CD4-positive, alpha-beta memory T cell (primary cell): ENCODE measurements at regions of chr11 and their contacts with region 1.

Region 1: DNA sequence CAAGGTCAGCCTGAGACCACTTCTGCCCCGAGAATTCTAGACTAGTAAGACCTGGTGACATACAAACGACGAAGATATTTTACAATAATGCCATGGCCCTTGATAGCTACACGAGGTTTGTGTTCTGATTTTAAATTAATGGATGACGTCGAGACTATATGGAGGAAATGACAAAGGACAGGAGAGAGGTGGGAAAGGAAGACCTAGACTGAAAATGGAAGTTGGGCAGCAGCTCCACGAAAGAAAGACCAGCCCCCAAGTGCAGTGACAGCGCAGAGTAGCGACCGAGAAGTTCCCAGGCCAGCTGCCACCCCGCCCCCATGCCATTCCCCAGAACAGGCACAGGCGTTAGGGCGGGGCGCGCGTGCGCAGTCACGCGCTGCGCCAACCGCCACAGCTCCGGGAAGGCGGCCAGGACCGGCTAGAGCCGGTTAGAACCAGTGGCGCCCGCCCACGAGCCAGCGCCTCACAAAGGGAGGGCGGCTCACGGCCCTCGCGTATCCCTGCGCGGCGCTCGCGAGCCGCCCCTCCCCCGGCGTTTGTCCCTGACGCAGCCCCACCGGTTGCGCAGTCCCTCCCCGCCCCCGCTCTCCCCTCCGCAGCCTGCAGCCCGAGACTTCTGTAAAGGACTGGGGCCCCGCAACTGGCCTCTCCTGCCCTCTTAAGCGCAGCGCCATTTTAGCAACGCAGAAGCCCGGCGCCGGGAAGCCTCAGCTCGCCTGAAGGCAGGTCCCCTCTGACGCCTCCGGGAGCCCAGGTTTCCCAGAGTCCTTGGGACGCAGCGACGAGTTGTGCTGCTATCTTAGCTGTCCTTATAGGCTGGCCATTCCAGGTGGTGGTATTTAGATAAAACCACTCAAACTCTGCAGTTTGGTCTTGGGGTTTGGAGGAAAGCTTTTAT is 1.5 kb upstream of the MALAT1 start:
- DNase-seq: peak; percentile 97 to 98 (median 97)
- H3K4me3 ChIP-seq: peak overlapping the region; percentile 96 to 99
- H3K4me3 Mint-ChIP-seq: peak overlapping the region in 1 of 8 donors; percentile 85
- H3K27ac ChIP-seq: peak overlapping the region; percentile 97
- H3K27ac Mint-ChIP-seq: no peak overlapping the region
- H3K4me1 ChIP-seq: peaks cover 16% of the 10 kb centered on the region
- H3K4me1 Mint-ChIP-seq: peaks cover 7 to 41% (median 20%) of the 10 kb centered on the region in 4 donors
- H3K27me3 ChIP-seq: no peaks in the 10 kb centered on the region
- H3K27me3 Mint-ChIP-seq: peaks cover 0 to 3% of the 10 kb centered on the region in 2 donors

Region 2: GRCh38 chr11:65117216-65118096 is 379.9 kb before region 1 on chr11 and contains the start of gene ZNHIT2:
- CTCF ChIA-PET with region 1: no interaction called
- POLR2A ChIA-PET with region 1: interaction called, 14 read pairs
- intact Hi-C with region 1: no loop called
- DNase-seq: peak; percentile 100
- H3K4me3 ChIP-seq: peak within 1 kb of the TSS; percentile 69 to 82
- H3K4me3 Mint-ChIP-seq: peak within 1 kb of the TSS; percentile 88 to 94 (median 92)
- H3K27ac ChIP-seq: peak within 1 kb of the TSS; percentile 91
- H3K27ac Mint-ChIP-seq: peak within 1 kb of the TSS; percentile 95 to 99 (median 97)
- H3K4me1 ChIP-seq: peaks cover 40% of the 10 kb centered on the region
- H3K4me1 Mint-ChIP-seq: peaks cover 17 to 69% (median 42%) of the 10 kb centered on the region in 4 donors
- H3K27me3 ChIP-seq: no peaks in the 10 kb centered on the region
- H3K27me3 Mint-ChIP-seq: no peaks in the 10 kb centered on the region
- total RNA-seq, gene ZNHIT2: 15.9 to 16.5 TPM

Region 3: DNA sequence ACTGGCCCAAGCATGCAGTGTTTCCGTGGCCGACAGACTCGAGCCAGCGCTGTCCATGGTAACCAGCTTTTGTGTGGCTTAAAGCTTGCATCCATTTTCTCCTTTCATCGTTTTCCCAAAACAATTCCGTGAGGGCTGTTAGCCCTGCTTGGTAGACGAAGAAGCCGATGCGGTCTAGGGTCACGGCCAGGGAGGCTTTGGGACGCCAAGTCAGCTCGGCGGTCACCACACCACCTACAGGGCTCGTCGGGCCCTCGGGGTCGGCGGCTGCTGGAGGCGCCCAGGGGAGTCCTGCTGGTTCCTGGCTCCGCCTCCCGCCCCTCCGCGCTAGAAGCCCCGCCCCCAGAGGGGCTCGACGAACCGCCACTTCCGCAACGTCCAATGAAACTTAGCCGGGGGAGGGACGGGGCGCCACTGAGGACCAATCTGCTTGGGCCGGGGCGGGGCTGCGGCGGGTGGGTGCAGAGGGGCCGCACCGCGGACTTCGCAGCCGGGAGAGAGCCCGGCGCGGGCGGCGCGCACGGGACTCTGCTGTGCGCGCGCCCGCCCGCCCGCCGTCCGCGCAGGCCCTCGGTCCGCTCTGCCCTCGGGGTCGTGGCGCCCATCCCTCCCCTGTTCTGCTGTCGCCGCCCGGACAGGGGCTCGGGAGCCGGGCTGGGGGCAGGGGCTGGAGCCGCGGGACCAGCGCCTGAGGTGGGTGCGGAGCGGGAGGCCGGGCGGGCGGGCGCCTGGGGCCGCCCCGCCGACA is 143.0 kb before region 1 on chr11 and contains the start of gene TIGD3:
- CTCF ChIA-PET with region 1: no interaction called
- POLR2A ChIA-PET with region 1: interaction called, 23 read pairs
- intact Hi-C with region 1: no loop called
- DNase-seq: peak; percentile 92 to 97 (median 94)
- H3K4me3 ChIP-seq: peak within 1 kb of the TSS in 1 of 2 donors; percentile 32
- H3K4me3 Mint-ChIP-seq: peak within 1 kb of the TSS; percentile 90 to 97 (median 93)
- H3K27ac ChIP-seq: peak within 1 kb of the TSS; percentile 50
- H3K27ac Mint-ChIP-seq: peak within 1 kb of the TSS; percentile 82 to 96 (median 88)
- H3K4me1 ChIP-seq: peaks cover 7% of the 10 kb centered on the region
- H3K4me1 Mint-ChIP-seq: peaks cover 8 to 17% (median 11%) of the 10 kb centered on the region in 4 donors
- H3K27me3 ChIP-seq: no peaks in the 10 kb centered on the region
- H3K27me3 Mint-ChIP-seq: no peaks in the 10 kb centered on the region
- total RNA-seq, gene TIGD3: 0.96 to 1.1 TPM

Region 4: GRCh38 chr11:65418711-65419459 is 78.5 kb before region 1 on chr11:
- CTCF ChIA-PET with region 1: interaction called, 192 read pairs
- POLR2A ChIA-PET with region 1: interaction called, 3,839 read pairs
- intact Hi-C with region 1: no loop called
- DNase-seq: peak; percentile 64 to 87 (median 70)
- H3K4me3 ChIP-seq: peak overlapping the region; percentile 86 to 95
- H3K4me3 Mint-ChIP-seq: peak overlapping the region; percentile 92 to 97 (median 95)
- H3K27ac ChIP-seq: peak overlapping the region; percentile 98
- H3K27ac Mint-ChIP-seq: peak overlapping the region; percentile 93 to 100 (median 97)
- H3K4me1 ChIP-seq: peaks cover 57% of the 10 kb centered on the region
- H3K4me1 Mint-ChIP-seq: peaks cover 30 to 72% (median 42%) of the 10 kb centered on the region in 4 donors
- H3K27me3 ChIP-seq: no peaks in the 10 kb centered on the region
- H3K27me3 Mint-ChIP-seq: peaks cover 0 to 4% of the 10 kb centered on the region in 2 donors

Region 5: DNA sequence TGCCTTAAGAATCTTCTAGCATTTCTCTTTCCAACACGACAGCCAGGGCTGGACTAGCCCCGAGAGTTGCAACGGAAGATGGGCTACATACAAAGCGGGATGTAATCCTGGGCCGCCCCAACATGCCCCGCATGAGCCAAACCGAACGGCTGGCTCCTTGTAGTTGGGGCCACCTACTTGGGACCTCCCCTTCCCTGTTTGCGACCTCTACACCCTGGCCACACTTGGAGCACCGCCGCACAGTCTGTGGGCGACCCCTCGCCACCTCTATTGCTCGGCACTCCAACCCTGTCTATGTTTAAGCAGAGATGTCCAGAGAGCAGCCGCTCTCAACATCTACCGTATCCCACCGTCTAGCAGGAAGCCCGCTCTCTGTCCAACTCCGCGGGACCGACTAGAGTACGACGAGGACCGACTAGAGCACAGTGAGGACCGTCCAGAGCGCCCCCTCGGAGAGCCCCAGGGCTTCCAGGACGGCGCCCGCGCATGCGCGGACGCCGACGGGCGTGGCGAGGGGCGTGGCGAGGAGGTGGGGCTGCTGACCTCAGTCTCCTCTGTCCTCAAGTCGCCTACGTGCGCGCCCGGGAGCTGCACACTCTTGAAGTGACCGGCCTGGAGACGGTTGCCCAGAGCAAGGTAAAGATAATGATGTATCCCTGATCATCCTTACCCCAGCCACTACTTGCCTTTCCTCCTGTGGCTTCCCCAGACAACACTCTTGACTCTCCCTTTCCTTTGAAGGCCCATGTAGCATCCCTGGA is 42.5 kb before region 1 on chr11:
- CTCF ChIA-PET with region 1: no interaction called
- POLR2A ChIA-PET with region 1: interaction called, 1,536 read pairs
- intact Hi-C with region 1: no loop called
- DNase-seq: peak; percentile 55 to 76 (median 64)
- H3K4me3 ChIP-seq: peak overlapping the region; percentile 78 to 84
- H3K4me3 Mint-ChIP-seq: peak overlapping the region; percentile 85 to 91 (median 88)
- H3K27ac ChIP-seq: peak overlapping the region; percentile 64
- H3K27ac Mint-ChIP-seq: peak overlapping the region; percentile 84 to 97 (median 89)
- H3K4me1 ChIP-seq: peaks cover 12% of the 10 kb centered on the region
- H3K4me1 Mint-ChIP-seq: peaks cover 11 to 34% (median 16%) of the 10 kb centered on the region in 4 donors
- H3K27me3 ChIP-seq: no peaks in the 10 kb centered on the region
- H3K27me3 Mint-ChIP-seq: no peaks in the 10 kb centered on the region

Region 6: DNA sequence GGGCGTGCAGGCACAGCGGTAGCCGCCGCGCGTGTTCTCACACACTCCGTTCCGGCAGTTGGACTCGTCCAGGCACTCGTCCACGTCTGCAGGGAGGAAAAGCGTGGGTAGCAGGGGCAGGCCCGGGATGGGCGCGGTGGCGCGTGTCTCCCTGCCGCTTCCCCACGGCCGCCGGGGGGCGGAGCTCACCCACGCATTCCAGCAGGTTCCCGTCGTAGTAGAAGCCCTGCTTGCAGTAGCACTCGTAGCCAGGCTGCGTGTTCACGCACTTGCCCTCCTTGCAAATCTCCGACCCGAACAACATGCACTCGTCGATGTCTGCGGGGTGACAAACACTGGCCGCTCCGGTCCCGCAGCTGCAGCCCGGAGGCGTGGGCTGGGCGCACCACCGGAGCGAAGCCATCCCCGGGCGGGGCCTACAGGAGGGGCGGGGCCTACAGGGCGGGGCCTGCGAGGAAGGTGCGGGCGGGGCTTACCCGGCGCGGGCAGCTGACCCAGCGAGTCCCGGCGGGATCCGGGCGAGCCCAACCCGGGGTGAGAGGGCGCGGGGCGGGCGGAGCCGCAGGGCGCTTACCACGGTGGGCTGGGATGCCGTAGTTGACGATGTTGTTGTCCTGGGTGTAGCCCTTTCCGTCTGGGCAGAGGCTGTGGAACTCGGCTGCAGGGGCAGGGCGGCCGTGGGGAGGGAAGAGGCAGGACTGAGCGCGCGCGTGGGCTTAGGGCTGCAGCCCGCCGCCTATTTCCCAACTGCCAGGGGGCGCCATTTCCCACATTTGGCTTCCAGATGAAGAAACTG is 43.1 kb after region 1 on chr11:
- CTCF ChIA-PET with region 1: interaction called, 6 read pairs
- POLR2A ChIA-PET with region 1: interaction called, 38 read pairs
- intact Hi-C with region 1: no loop called
- DNase-seq: peak; percentile 90 to 95 (median 91)
- H3K4me3 ChIP-seq: peak overlapping the region; percentile 73 to 91
- H3K4me3 Mint-ChIP-seq: peak overlapping the region; percentile 82 to 90 (median 87)
- H3K27ac ChIP-seq: peak overlapping the region; percentile 55
- H3K27ac Mint-ChIP-seq: peak overlapping the region; percentile 81 to 95 (median 87)
- H3K4me1 ChIP-seq: peaks cover 17% of the 10 kb centered on the region
- H3K4me1 Mint-ChIP-seq: peaks cover 12 to 36% (median 16%) of the 10 kb centered on the region in 4 donors
- H3K27me3 ChIP-seq: no peaks in the 10 kb centered on the region
- H3K27me3 Mint-ChIP-seq: no peaks in the 10 kb centered on the region

Region 7: DNA sequence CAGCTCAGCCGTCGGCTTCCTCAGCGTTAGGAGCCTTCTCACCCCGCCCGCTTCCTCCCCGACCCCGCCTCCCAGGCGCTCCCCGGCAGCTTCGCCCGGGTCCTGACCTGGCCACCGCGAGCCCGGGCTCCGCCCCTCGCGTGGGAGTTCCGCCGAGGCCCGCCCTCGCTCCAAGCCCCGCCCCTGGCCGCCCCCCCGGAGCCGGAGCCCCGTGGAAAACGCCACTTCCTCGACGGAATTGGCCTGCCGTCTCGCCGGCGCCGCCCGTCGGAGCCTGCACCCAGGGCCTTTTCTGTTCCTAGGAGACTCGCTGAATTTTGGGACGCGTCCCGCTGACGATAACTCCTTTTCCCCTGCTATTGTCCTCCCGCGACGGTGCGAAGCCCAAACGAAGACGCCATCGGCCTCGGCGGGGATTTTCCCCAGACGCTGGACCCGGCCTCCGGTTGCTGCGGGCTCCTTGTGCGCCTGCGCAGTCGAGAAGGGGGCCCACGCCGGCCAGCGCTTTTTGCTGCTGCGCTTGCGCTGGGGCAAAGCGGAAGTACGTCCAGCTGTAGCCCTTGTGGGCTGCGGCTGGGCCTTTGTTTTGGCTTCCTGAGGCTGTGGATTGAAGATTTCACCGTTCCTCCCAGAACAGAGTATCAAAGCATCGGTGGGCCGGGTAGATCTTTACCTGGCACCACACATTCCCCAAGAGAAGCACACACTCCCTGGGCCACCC is 155.3 kb after region 1 on chr11:
- CTCF ChIA-PET with region 1: no interaction called
- POLR2A ChIA-PET with region 1: interaction called, 25 read pairs
- intact Hi-C with region 1: no loop called
- DNase-seq: peak; percentile 95 to 99 (median 97)
- H3K4me3 ChIP-seq: peak overlapping the region; percentile 50 to 64
- H3K4me3 Mint-ChIP-seq: peak overlapping the region; percentile 88 to 95 (median 91)
- H3K27ac ChIP-seq: peak overlapping the region; percentile 91
- H3K27ac Mint-ChIP-seq: peak overlapping the region; percentile 96 to 99 (median 98)
- H3K4me1 ChIP-seq: peaks cover 35% of the 10 kb centered on the region
- H3K4me1 Mint-ChIP-seq: peaks cover 34 to 59% (median 48%) of the 10 kb centered on the region in 4 donors
- H3K27me3 ChIP-seq: no peaks in the 10 kb centered on the region
- H3K27me3 Mint-ChIP-seq: no peaks in the 10 kb centered on the region

Region 8: DNA sequence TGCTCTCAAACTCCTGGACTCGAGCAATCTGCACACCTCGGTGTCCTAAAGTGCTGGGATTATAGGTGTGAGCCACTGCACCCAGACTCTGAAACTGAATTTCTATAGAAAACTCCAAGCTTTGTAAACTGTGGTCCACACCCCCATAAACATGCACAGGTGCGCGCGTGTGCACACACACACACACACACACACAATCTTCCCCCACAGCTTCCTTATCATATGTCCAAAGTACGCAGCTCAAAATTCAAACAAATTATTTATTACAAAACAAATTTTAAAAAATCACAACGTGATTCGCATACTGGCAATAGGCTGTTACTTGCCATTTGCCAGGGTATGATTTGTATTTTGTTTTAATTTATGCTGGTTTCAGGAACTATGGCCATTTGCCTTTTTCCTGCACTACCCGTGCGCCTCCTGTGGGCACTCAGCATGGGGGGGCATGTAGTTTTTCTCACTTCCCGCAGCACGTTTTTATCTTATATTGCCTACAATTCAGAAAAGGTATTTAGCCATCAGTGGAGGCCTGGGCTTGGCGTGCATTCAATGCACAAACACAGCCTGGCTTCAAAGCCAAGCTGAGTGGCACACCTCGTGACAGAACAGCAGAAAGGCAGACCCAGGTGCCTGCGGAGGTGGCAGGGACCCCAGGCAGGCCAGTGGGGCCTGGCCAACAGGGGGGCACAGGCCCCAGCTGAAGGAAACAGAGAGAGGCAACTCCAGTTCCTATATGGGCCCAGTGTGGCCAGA is 325.6 kb after region 1 on chr11:
- CTCF ChIA-PET with region 1: no interaction called
- POLR2A ChIA-PET with region 1: no interaction called
- intact Hi-C with region 1: no loop called
- DNase-seq: no peak
- H3K4me3 ChIP-seq: no peak overlapping the region
- H3K4me3 Mint-ChIP-seq: no peak overlapping the region
- H3K27ac ChIP-seq: no peak overlapping the region
- H3K27ac Mint-ChIP-seq: no peak overlapping the region
- H3K4me1 ChIP-seq: no peaks in the 10 kb centered on the region
- H3K4me1 Mint-ChIP-seq: peaks cover 0 to 5% (median under 1%) of the 10 kb centered on the region in 4 donors
- H3K27me3 ChIP-seq: no peaks in the 10 kb centered on the region
- H3K27me3 Mint-ChIP-seq: no peaks in the 10 kb centered on the region